ENCODE measurements at regions of chr6 and their contacts with region 1.

Region 1: DNA sequence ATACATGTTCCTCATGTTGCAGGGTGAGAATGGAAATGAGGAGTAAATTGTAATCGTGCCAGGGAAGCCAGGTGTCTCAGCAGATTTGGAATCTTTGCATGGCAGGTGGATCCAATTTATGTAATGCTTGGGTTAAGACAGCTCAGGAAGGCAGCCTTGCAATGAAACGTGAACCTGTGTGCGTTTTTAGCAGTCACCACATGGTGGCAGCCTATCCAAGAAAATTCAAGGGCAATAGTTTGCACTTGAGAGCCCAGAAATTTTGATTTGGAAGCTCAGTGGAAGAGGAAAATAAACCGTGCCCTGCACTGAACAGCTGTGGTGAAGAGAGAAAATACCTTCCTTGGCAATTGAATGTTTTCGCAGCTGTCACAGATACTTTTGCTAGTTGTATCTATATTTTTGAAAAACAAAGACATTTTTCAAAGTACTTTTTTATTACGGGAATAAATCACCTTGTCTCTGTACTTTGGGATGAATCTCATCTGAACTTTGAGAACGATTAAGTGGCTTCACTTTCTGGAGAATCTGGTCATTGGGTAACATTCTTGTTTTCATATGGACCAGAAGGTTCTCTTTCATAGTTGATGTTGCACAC is 26.5 kb downstream of the MTHFD1L start:
- DNase-seq: peak; percentile 79
- ATAC-seq: peak; percentile 77
- H3K4me3 ChIP-seq: no peak overlapping the region
- H3K27ac ChIP-seq: 0 out of 2 replicates have a peak overlapping the region, but pooled peaks have one; percentile 17
- H3K4me1 ChIP-seq: peaks cover 13% of the 10 kb centered on the region
- H3K27me3 ChIP-seq: no peaks in the 10 kb centered on the region
- CTCF ChIP-seq: peak; percentile 79

Region 2: DNA sequence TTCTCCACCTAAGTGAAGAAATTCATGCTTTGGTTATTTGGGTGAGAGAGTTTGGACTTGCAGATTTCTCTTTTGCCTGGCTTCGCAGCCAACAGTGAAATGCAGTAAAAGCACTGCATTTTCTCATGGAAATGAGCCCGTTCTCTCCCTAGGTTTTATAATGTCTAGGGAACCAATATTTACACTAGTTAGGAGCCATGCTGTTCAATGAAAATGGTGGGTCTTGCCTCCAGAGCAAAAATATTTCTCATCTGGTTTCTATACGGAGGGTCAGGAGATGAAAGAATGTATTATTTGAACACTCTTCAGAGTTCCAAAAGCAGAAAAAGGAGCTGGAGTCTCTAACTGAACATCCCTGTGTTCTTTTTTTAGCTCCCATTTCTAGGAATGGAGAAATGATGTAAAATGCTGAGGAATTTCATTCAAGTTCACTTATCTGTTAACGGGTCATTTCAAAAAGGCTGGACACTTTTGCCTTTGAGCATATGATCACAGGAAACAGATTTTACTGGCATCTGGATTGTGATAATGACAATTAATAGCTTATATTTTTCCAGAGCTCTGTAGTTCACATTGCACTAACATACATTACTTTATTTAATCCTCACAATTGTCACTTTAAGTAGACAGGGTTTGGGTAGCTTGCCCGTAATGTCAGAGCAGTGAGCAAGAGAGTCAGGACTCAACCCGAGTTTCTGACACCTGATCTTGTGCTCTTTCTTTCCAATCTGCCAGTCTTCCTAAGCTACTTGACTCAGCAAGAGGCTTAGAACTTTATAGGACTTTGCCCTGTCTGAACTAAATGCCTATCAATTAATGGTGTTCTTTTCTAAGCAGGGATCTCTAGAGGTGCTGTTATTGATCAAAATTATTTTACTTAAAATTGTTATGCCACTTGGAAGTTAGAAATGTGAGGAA is 671.1 kb before region 1 on chr6:
- CTCF ChIA-PET with region 1: no interaction called
- POLR2A ChIA-PET with region 1: no interaction called
- intact Hi-C with region 1: no loop called
- DNase-seq: no peak
- ATAC-seq: no peak
- H3K4me3 ChIP-seq: no peak overlapping the region
- H3K27ac ChIP-seq: no peak overlapping the region
- H3K4me1 ChIP-seq: no peaks in the 10 kb centered on the region
- H3K27me3 ChIP-seq: no peaks in the 10 kb centered on the region
- CTCF ChIP-seq: no peak

Region 3: DNA sequence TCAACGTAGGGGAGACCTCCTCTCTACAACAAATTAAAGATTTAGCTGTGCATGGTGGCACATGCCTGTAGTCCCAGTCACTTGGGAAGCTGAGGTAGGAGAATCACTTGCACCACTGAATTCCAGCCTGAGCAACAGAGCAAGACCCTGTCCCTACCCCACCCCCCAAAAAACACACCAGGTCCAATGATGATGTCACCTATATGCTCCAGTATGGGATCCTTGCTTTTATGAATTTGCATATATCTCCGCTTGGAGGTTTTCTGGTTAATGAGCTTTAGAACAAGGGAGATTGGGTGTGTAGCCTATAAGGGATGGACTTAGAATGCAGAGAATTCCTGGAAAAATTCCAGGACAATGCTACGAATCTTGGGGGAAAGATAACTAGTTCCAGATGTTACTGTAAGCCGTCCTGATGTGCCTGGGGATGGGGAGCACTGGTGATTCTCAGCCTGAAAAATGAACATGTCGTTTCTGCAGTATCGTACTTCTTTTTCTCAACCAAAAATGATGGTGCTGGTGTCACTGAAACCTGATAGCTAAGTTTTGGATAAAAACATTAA is 438.2 kb after region 1 on chr6:
- CTCF ChIA-PET with region 1: interaction called, 17 read pairs
- POLR2A ChIA-PET with region 1: no interaction called
- intact Hi-C with region 1: loop called (anchors 1 kb)
- DNase-seq: no peak
- ATAC-seq: no peak
- H3K4me3 ChIP-seq: no peak overlapping the region
- H3K27ac ChIP-seq: no peak overlapping the region
- H3K4me1 ChIP-seq: peaks cover 10% of the 10 kb centered on the region
- H3K27me3 ChIP-seq: no peaks in the 10 kb centered on the region
- CTCF ChIP-seq: no peak

Measured in PC-3 (cell line).